Transverse colon (tissue), 4 donors: ENCODE measurements at regions of chr1 and their contacts with region 1.

Region 1: GRCh38 chr1:156445789-156446263 is 54.7 kb downstream of the MEF2D start:
- DNase-seq: peak; percentile 85
- H3K4me3 ChIP-seq: no peak overlapping the region
- H3K27ac ChIP-seq: no peak overlapping the region
- H3K4me1 ChIP-seq: peaks cover 0 to 6% (median 1%) of the 10 kb centered on the region in 4 donors
- H3K27me3 ChIP-seq: peaks cover 43% of the 10 kb centered on the region
- CTCF ChIP-seq: peak; percentile 93 to 97 (median 95)
- EP300 ChIP-seq: no peak
- POLR2A ChIP-seq: no peak

Region 2: GRCh38 chr1:156383023-156383422 is 62.8 kb before region 1 on chr1:
- in situ Hi-C with region 1: loop called (anchors 5 to 10 kb)
- intact Hi-C with region 1: loop called (anchors 2 kb)
- DNase-seq: peak; percentile 60
- H3K4me3 ChIP-seq: no peak overlapping the region
- H3K27ac ChIP-seq: no peak overlapping the region
- H3K4me1 ChIP-seq: no peaks in the 10 kb centered on the region
- H3K27me3 ChIP-seq: peaks cover 22% of the 10 kb centered on the region
- CTCF ChIP-seq: peak; percentile 66 to 80 (median 76)
- EP300 ChIP-seq: no peak
- POLR2A ChIP-seq: no peak